Activated T-helper 1 cell treated with anti-CD3 and anti-CD28 coated beads, Interleukin-12 subunit alpha, Interleukin-12 subunit beta, Interleukin-2, Interleukin-4 antibody, amounts not matched to agents 30 ng/mL and 10 ng/mL and 1 ng/mL, durations not matched to agents 14 hours and 24 hours and 36 hours (primary cell): ENCODE measurements at regions of chr15 and their contacts with region 1.

Region 1: DNA sequence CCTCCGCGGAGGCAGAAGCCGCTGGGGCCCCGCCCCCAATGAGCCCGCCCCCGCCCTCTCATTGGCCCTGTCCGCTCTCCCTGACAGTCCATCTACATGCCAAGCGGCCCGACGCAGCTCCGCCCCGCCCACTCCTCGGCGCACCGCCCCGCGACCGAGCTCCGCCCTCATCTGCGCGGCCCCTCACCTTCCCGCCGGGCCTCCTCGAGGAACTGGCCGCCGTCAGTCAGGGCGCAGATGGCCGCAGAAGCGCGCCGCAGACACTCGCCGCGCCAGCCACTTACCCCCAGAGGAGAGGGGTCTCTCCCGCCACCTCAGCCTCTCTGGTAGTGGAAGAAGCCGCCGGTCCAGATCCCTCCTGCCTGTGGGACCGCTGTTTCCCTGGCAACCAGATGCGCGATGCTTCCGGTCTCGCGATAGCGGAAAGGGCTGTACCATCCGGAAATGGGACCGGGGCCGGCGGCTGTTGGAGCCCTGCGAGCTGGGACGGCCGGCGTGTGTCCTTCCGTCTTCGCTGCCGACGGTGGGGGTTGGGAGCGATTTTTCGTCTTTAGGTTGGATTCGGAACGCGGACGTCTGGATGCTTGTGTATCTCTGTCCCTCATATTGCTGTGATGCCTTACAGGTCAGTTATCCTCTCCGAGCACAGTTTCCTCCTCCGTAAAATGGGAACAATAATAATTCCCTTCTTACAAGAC is at the start of gene FSIP1:
- DNase-seq: peak; percentile 94
- H3K4me3 Mint-ChIP-seq: peak within 1 kb of the TSS; percentile 86
- H3K27ac Mint-ChIP-seq: peak within 1 kb of the TSS; percentile 75
- H3K4me1 Mint-ChIP-seq: peaks cover 43% of the 10 kb centered on the region
- H3K27me3 Mint-ChIP-seq: peaks cover 7% of the 10 kb centered on the region
- total RNA-seq, gene FSIP1: 0.26 and 0.34 TPM in 2 replicates

Region 2: GRCh38 chr15:38554354-38554753 is 1228.2 kb before region 1 on chr15:
- intact Hi-C with region 1: loop called (anchors 10 kb)
- DNase-seq: no peak
- H3K4me3 Mint-ChIP-seq: peak overlapping the region; percentile 96
- H3K27ac Mint-ChIP-seq: peak overlapping the region; percentile 93
- H3K4me1 Mint-ChIP-seq: peaks cover 87% of the 10 kb centered on the region
- H3K27me3 Mint-ChIP-seq: no peaks in the 10 kb centered on the region

Region 3: GRCh38 chr15:39874890-39875549 is 92.4 kb after region 1 on chr15:
- intact Hi-C with region 1: loop called (anchors 1 kb)
- DNase-seq: no peak
- H3K4me3 Mint-ChIP-seq: no peak overlapping the region
- H3K27ac Mint-ChIP-seq: no peak overlapping the region
- H3K4me1 Mint-ChIP-seq: no peaks in the 10 kb centered on the region
- H3K27me3 Mint-ChIP-seq: peaks cover 12% of the 10 kb centered on the region

Region 4: GRCh38 chr15:40038638-40039543 is 256.3 kb after region 1 on chr15 and contains the start of gene SRP14:
- intact Hi-C with region 1: loop called (anchors 1 kb)
- DNase-seq: peak; percentile 88
- H3K4me3 Mint-ChIP-seq: peak within 1 kb of the TSS; percentile 100
- H3K27ac Mint-ChIP-seq: peak within 1 kb of the TSS; percentile 98
- H3K4me1 Mint-ChIP-seq: peaks cover 44% of the 10 kb centered on the region
- H3K27me3 Mint-ChIP-seq: no peaks in the 10 kb centered on the region
- total RNA-seq, gene SRP14: 144 and 147 TPM in 2 replicates

Region 5: GRCh38 chr15:40217159-40217824 is 434.7 kb after region 1 on chr15:
- intact Hi-C with region 1: loop called (anchors 2 kb)
- DNase-seq: peak; percentile 38
- H3K4me3 Mint-ChIP-seq: no peak overlapping the region
- H3K27ac Mint-ChIP-seq: no peak overlapping the region
- H3K4me1 Mint-ChIP-seq: no peaks in the 10 kb centered on the region
- H3K27me3 Mint-ChIP-seq: no peaks in the 10 kb centered on the region

Region 6: DNA sequence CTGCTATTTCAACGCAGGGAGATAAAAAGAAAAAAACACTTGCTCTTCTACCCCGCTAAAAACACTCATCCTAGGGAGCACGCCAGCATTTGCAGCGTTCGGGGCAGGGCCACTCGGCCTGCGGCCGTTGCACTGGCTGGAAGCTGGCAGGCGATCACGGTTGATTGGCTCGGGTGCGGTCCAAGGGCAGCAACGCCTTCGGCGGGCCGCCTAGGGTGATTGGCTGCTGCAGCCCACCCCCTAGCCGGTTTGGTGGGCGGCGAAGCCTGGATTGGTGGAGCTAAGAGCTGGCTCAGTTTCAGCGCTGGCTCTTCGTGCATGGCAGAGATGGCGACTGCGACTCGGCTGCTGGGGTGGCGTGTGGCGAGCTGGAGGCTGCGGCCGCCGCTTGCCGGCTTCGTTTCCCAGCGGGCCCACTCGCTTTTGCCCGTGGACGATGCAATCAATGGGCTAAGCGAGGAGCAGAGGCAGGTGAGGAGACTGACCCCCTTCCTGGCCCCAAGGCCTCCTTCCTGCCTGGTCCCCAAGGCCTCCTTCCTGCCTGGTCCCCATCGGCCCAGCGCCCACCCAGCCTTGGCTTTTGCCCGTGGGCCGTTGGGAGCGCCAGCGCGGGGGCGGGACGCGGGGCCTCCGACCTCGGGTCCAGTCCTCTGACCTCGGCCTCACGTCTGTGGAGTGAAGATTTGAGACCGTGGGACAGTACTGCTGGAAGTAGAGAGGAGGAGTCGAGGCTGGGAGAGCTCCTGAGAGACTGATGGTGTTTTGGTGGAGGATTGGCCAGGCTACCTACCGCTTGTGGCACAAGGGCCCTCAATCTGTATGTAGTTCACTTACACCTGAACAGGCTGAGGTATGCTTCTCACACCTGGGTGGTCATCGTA is 623.2 kb after region 1 on chr15 and contains the start of gene IVD:
- intact Hi-C with region 1: loop called (anchors 10 kb)
- DNase-seq: peak; percentile 77
- H3K4me3 Mint-ChIP-seq: peak within 1 kb of the TSS; percentile 88
- H3K27ac Mint-ChIP-seq: peak within 1 kb of the TSS; percentile 87
- H3K4me1 Mint-ChIP-seq: peaks cover 37% of the 10 kb centered on the region
- H3K27me3 Mint-ChIP-seq: no peaks in the 10 kb centered on the region
- total RNA-seq, gene IVD: 59.6 and 65.2 TPM in 2 replicates